GM10248 (cell line): ENCODE measurements at regions of chr3 and their contacts with region 1.

Region 1: GRCh38 chr3:58502872-58503271 is 11.0 kb downstream of the KCTD6 start:
- DNase-seq: no peak
- CTCF ChIP-seq: no peak

Region 2: GRCh38 chr3:58520403-58521335 is 17.8 kb after region 1 on chr3:
- CTCF ChIA-PET with region 1: interaction called, 18 read pairs
- POLR2A ChIA-PET with region 1: no interaction called
- DNase-seq: peak; percentile 39
- CTCF ChIP-seq: no peak